K562 (cell line): ENCODE measurements at regions of chr12 and their contacts with region 1.

Region 1: DNA sequence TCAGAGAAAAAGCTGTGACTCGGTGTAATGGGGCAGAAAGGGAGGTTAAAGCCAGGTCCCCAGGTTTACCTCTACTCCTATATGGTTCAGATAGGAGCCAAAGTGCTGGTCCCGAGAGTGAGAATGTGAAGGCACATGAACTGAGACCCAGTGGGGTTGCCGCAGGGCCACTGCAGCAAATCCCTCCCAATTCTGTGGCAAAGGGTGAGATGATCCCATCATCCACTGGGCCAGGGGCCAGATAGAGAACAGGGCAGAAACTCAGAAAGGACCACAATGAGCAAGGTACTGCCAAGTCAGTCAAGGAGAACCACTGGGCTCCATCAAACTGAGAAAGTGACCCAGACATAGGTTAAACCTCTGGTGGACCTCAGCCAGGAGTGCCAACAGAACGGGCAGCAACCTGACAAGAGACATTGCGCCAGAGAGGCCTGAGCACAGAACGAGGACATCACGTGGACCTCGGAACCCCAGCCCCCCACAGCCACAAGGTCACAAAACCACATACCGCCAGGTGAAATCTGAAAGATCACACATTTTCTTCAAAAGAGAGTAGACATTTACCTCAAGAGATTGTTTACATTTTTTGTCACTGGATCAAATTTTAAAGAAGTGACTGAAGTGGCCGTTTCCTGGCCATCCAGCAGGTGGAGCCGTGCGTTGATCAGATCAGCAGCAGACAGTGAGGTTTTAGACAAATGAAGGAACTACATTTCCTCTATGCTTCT is 20.5 kb upstream of the ITPR2 start:
- DNase-seq: peak; percentile 53 to 70 (median 58)
- ATAC-seq: peak; percentile 95
- H3K4me3 ChIP-seq: no peak overlapping the region
- H3K27ac ChIP-seq: no peak overlapping the region
- H3K4me1 ChIP-seq: peaks cover 0 to 6% of the 10 kb centered on the region in 2 experiments; a peak in 2 of 5 replicates
- H3K27me3 ChIP-seq: no peaks in the 10 kb centered on the region; a peak in 2 of 5 replicates
- CTCF ChIP-seq: peak; percentile 83 to 90 (median 88)
- EP300 ChIP-seq: no peak
- POLR2A ChIP-seq: no peak
- RAD21 ChIP-seq: peak; percentile 81 to 88

Region 2: GRCh38 chr12:26884765-26885576 is 31.5 kb after region 1 on chr12:
- CTCF ChIA-PET with region 1: interaction called, 10 read pairs
- POLR2A ChIA-PET with region 1: no interaction called
- in situ Hi-C with region 1: no loop called
- intact Hi-C with region 1: loop called (anchors 2 kb)
- DNase-seq: peak; percentile 70 to 84 (median 76)
- ATAC-seq: peak; percentile 97
- H3K4me3 ChIP-seq: no peak overlapping the region
- H3K27ac ChIP-seq: no peak overlapping the region
- H3K4me1 ChIP-seq: peaks cover 0 to 4% of the 10 kb centered on the region in 2 experiments; a peak in 3 of 5 replicates
- H3K27me3 ChIP-seq: 0 out of 5 replicates have a peak, but pooled peaks cover 0 to 3% of the 10 kb centered on the region in 2 experiments
- CTCF ChIP-seq: peak; percentile 90 to 94 (median 93)
- EP300 ChIP-seq: no peak
- POLR2A ChIP-seq: no peak
- RAD21 ChIP-seq: peak; percentile 80 to 87

Region 3: GRCh38 chr12:27142101-27142721 is 288.7 kb after region 1 on chr12:
- CTCF ChIA-PET with region 1: interaction called, 3 read pairs
- POLR2A ChIA-PET with region 1: no interaction called
- in situ Hi-C with region 1: no loop called
- intact Hi-C with region 1: loop called (anchors 5 kb)
- DNase-seq: peak; percentile 54 to 78 (median 61)
- ATAC-seq: peak; percentile 97
- H3K4me3 ChIP-seq: no peak overlapping the region
- H3K27ac ChIP-seq: no peak overlapping the region
- H3K4me1 ChIP-seq: no peaks in the 10 kb centered on the region
- H3K27me3 ChIP-seq: no peaks in the 10 kb centered on the region
- CTCF ChIP-seq: peak; percentile 78 to 83 (median 79)
- EP300 ChIP-seq: no peak
- POLR2A ChIP-seq: no peak
- RAD21 ChIP-seq: peak; percentile 38 to 72

Region 4: DNA sequence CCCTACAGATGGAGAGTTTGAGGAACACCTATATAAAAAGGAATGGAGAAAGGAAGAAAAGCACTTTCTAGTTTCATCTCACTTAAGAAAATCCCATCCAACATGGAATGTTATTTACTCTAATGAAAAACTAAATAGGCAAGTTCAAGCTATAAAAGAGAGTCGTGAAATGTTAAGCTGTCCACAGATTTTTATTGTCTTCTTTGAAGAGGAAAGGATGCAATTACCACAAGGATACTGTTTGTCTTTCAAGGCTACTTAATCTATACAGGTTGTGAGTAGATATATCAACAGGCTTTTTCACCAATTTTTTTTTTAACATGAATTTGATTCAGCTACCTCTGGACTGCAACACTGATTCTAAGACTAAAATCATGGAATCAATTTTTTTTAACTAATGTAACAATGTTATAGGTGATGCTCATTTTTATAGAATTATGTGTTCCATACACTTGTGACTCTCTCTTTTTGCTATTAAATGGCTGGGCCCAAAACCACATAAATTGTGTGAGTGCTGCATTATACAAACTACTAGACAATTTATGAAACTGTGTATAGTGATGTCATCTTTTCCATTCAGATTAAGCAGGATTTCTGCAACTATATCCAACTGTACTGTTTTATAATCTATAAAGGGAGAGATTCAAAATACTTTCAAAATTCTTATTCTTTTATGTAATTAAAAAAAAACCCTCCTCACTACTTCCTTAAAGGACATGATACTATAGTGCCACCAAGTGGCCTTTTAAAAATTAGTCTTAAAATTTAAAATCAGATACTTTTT is 452.4 kb after region 1 on chr12:
- CTCF ChIA-PET with region 1: interaction called, 4 read pairs
- POLR2A ChIA-PET with region 1: no interaction called
- in situ Hi-C with region 1: no loop called
- intact Hi-C with region 1: loop called (anchors 10 kb)
- DNase-seq: peak in 2 of 4 experiments; percentile 10 to 34
- ATAC-seq: no peak
- H3K4me3 ChIP-seq: no peak overlapping the region
- H3K27ac ChIP-seq: no peak overlapping the region
- H3K4me1 ChIP-seq: no peaks in the 10 kb centered on the region; a peak in 1 of 5 replicates
- H3K27me3 ChIP-seq: no peaks in the 10 kb centered on the region
- CTCF ChIP-seq: peak in 2 of 3 experiments; percentile 42 to 64; a peak in 3 of 6 replicates
- EP300 ChIP-seq: no peak
- POLR2A ChIP-seq: no peak
- RAD21 ChIP-seq: peak; percentile 62 to 63